Left cardiac atrium (tissue), 4 donors: ENCODE measurements at regions of chr7 and their contacts with region 1.

Region 1: GRCh38 chr7:123682690-123683089 is 27.0 kb downstream of the LMOD2 start:
- DNase-seq: no peak
- ATAC-seq: peak; percentile 53 to 66

Region 2: DNA sequence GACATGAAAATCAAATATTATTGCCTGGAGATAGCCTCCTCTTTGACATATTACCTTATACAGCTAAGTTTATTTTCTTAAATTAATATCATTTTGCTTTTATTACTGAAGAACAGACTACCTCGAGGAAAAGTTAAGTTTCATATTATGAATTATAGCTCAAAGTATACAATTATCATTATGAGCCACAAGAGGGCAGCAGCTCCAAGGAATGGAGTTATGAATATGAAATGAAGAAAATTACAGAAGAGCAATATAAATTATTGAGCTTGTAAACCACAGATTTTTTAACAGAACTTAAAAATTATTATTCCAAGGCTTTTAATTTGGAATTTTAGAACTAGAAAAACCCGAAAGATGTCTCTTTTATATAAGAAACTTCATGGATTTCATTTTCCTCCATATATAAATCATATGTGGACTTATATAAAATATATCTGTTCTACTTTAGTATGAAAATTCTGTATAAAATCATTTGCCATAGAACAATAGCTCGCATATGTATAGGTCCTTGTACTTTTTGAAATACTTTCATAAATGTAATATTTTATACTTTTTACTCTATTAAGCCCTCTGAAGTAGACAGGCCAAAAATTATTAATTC is 188.4 kb before region 1 on chr7:
- intact Hi-C with region 1: loop called in 1 of 2 experiments (anchors 10 kb)
- DNase-seq: no peak
- ATAC-seq: peak; percentile 29 to 41

Region 3: DNA sequence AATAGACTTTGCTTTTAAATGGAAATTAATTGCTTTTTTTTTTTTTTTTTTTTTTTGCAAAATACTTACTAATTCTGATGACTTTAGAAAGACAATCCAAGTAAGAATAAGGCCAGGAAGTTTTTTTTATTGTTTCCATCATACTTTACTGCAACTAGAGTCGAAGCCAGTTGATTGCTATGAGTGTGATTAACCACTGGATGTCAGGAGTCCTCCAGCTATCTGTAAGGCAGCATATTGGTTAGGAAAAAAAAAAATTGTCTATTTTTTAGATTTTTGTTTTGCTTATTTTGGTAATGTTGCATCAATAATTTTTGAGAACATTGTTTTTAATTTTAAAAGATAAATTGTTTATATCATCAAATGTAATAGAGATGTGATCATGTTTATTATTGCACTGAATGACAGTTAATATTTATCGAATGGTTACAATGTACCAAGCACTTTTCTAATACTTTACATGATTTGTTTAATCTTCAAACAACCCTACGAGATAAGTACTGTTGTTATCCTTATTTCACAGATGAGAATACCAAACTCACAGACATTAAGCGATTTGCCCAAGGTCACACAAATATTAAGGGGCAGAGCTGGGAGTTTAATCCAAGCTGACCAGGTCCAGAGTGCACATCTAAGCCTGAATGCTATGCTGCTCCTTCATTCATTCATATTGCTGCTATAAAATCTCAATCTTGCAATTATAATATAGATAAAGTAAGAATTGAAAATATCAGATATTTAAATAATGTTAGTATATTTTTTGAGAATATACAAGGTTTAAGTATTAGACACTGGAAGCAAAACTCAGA is 46.9 kb before region 1 on chr7:
- intact Hi-C with region 1: loop called in 1 of 2 experiments (anchors 5 kb)
- DNase-seq: no peak
- ATAC-seq: peak; percentile 63 to 66

Region 4: GRCh38 chr7:123871998-123872867 is 189.5 kb after region 1 on chr7:
- intact Hi-C with region 1: loop called (anchors 2 to 10 kb)
- DNase-seq: peak; percentile 27
- ATAC-seq: peak; percentile 81 to 89